ENCODE measurements at regions of chr12 and their contacts with region 1.

Region 1: GRCh38 chr12:91811481-91812287 is 334.0 kb downstream of the BTG1 start:
- H3K4me3 Mint-ChIP-seq: no peak overlapping the region
- H3K27ac Mint-ChIP-seq: no peak overlapping the region
- H3K4me1 Mint-ChIP-seq: no peaks in the 10 kb centered on the region
- H3K27me3 Mint-ChIP-seq: no peaks in the 10 kb centered on the region

Region 2: GRCh38 chr12:91382081-91382543 is 429.6 kb before region 1 on chr12:
- intact Hi-C with region 1: loop called (anchors 10 kb)
- H3K4me3 Mint-ChIP-seq: peak overlapping the region; percentile 62
- H3K27ac Mint-ChIP-seq: no peak overlapping the region
- H3K4me1 Mint-ChIP-seq: peaks cover 21% of the 10 kb centered on the region
- H3K27me3 Mint-ChIP-seq: peaks cover 8% of the 10 kb centered on the region

Region 3: DNA sequence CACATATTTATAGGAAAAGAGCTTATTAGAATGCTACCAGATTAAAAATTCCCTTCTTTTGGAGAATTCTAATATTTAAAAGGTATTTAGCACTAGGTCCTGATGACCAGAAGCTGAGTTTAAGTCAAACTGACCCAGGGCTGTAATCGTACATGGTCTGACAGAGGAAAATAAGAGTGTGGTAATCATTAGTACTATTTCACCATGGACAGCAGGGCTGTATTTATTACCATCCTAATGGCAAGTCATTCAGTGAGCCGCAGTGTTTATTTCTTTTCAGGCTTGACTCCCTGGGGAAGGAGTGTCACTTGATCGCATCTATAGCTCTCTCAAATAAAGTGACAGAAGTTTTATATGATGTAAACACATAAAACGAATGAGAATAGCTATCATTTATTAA is 72.1 kb after region 1 on chr12:
- intact Hi-C with region 1: no loop called
- H3K4me3 Mint-ChIP-seq: no peak overlapping the region
- H3K27ac Mint-ChIP-seq: no peak overlapping the region
- H3K4me1 Mint-ChIP-seq: no peaks in the 10 kb centered on the region
- H3K27me3 Mint-ChIP-seq: no peaks in the 10 kb centered on the region

Region 4: GRCh38 chr12:92408072-92408900 is 596.6 kb after region 1 on chr12:
- intact Hi-C with region 1: loop called (anchors 5 kb)
- H3K4me3 Mint-ChIP-seq: no peak overlapping the region
- H3K27ac Mint-ChIP-seq: no peak overlapping the region
- H3K4me1 Mint-ChIP-seq: peaks cover 17% of the 10 kb centered on the region
- H3K27me3 Mint-ChIP-seq: peaks cover 6% of the 10 kb centered on the region

Region 5: DNA sequence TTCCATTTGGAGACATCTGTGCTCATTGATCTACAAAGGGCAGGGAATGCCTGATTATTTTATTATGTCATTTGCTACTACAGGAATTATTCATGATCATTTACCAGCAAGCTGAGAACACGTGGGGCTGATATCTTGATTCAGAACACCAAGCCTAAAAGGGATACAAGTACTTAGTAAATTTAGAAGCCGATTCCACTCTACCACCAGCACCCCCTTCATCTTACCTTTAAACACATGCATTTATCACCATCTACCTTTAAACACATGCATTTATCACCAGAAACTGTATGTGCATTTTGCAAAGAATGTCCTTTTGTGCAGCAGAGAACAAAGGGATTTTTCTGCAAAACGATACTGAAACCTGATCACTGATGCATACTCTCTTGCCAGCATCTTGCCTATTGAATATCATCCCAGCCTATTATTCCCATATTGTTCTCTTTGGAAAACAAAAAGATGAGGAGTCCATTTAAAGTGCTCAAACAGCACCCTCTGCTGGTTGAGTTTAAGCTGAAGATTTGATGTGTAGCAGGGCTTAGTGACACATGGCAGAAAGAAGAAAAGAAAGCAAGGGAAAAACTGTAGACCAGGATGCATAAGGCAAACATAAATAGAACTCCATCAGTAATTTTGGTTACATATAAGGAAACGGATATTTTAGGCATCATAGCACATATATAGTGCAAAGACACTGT is 758.5 kb after region 1 on chr12:
- intact Hi-C with region 1: loop called (anchors 2 kb)
- H3K4me3 Mint-ChIP-seq: no peak overlapping the region
- H3K27ac Mint-ChIP-seq: no peak overlapping the region
- H3K4me1 Mint-ChIP-seq: peaks cover 17% of the 10 kb centered on the region
- H3K27me3 Mint-ChIP-seq: no peaks in the 10 kb centered on the region

Region 6: GRCh38 chr12:92649511-92650227 is 838.0 kb after region 1 on chr12:
- intact Hi-C with region 1: loop called (anchors 2 kb)
- H3K4me3 Mint-ChIP-seq: no peak overlapping the region
- H3K27ac Mint-ChIP-seq: peak overlapping the region; percentile 55
- H3K4me1 Mint-ChIP-seq: peaks cover 11% of the 10 kb centered on the region
- H3K27me3 Mint-ChIP-seq: peaks cover 2% of the 10 kb centered on the region

Measured in dendritic cell treated with granulocyte-macrophage colony-stimulating factor and Interleukin-4, amounts not matched to agents 40 ng/mL and 50 ng/mL, for 4 days (primary cell).